ENCODE measurements at regions of chr6 and their contacts with region 1.

Region 1: GRCh38 chr6:157517601-157518359 is 136.8 kb downstream of the ZDHHC14 start:
- DNase-seq: no peak
- H3K4me3 Mint-ChIP-seq: no peak overlapping the region
- H3K27ac Mint-ChIP-seq: no peak overlapping the region
- H3K4me1 Mint-ChIP-seq: peaks cover 21% of the 10 kb centered on the region
- H3K27me3 Mint-ChIP-seq: no peaks in the 10 kb centered on the region
- CTCF ChIP-seq: no peak

Region 2: DNA sequence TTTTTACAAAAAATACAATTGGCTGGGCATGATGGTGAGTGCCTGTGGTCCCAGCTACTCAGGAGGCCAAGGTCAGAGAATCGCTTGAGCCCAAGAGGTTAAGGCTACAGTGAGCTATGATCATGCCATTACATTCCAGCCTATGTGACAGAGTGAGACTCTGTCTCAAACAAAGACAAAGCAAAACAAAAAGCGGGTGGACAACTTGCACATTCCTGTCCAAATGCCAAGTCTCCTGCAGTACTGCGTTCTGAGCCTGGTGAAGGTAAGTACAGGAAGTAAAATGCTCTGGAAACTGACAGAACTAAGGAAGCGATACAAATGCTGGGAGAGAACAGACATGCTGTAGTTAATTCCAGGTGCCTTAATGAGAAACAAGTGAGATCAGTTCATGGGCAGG is 174.0 kb before region 1 on chr6:
- CTCF ChIA-PET with region 1: no interaction called
- intact Hi-C with region 1: no loop called
- DNase-seq: no peak
- H3K4me3 Mint-ChIP-seq: no peak overlapping the region
- H3K27ac Mint-ChIP-seq: no peak overlapping the region
- H3K4me1 Mint-ChIP-seq: no peaks in the 10 kb centered on the region
- H3K27me3 Mint-ChIP-seq: no peaks in the 10 kb centered on the region
- CTCF ChIP-seq: no peak

Region 3: GRCh38 chr6:157374889-157375443 is 142.8 kb before region 1 on chr6:
- CTCF ChIA-PET with region 1: no interaction called
- intact Hi-C with region 1: no loop called
- DNase-seq: no peak
- H3K4me3 Mint-ChIP-seq: no peak overlapping the region
- H3K27ac Mint-ChIP-seq: no peak overlapping the region
- H3K4me1 Mint-ChIP-seq: no peaks in the 10 kb centered on the region
- H3K27me3 Mint-ChIP-seq: no peaks in the 10 kb centered on the region
- CTCF ChIP-seq: no peak

Region 4: DNA sequence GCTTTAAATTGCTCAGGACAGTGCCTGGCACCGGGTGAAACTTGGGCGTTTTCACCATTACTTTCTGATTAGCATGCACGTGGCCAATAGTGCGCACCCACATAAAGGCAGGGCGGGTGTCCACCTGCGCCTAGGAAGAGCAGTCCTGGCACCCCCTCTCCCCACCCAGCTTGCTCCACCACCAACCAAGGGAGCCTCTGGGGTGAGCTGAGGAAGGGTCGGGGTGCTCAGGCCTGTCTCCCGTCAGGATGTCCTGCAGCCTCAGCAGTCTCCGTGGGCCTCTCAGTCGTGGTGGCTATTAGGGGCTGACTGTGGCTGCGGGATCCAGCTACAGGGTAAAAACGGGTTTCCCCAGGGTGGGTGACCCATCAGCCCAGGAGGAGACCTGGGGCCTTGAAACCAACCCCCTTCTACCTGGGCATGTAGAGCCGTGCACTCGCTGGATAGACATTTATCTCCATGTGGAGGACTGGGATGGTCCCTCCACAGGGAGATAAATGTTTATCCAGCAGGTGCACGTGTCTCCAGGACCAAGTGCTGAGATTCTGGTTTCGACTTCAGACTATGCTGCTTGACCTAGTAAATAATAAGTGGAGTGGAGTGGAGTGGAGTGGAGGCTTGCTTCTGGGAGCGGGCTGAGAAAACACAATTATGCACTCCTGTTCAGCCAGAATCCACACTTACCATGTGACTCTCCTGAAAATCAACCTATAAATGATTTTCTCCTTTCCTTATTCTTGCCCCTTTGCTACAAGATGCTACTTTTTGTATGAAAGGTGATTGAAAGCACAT is 45.7 kb before region 1 on chr6:
- CTCF ChIA-PET with region 1: no interaction called
- intact Hi-C with region 1: no loop called
- DNase-seq: no peak
- H3K4me3 Mint-ChIP-seq: no peak overlapping the region
- H3K27ac Mint-ChIP-seq: no peak overlapping the region
- H3K4me1 Mint-ChIP-seq: peaks cover 6% of the 10 kb centered on the region
- H3K27me3 Mint-ChIP-seq: no peaks in the 10 kb centered on the region
- CTCF ChIP-seq: no peak

Region 5: GRCh38 chr6:157500022-157500421 is 17.8 kb before region 1 on chr6:
- CTCF ChIA-PET with region 1: no interaction called
- intact Hi-C with region 1: loop called (anchors 2 kb)
- DNase-seq: no peak
- H3K4me3 Mint-ChIP-seq: no peak overlapping the region
- H3K27ac Mint-ChIP-seq: no peak overlapping the region
- H3K4me1 Mint-ChIP-seq: no peaks in the 10 kb centered on the region
- H3K27me3 Mint-ChIP-seq: no peaks in the 10 kb centered on the region
- CTCF ChIP-seq: no peak

Region 6: DNA sequence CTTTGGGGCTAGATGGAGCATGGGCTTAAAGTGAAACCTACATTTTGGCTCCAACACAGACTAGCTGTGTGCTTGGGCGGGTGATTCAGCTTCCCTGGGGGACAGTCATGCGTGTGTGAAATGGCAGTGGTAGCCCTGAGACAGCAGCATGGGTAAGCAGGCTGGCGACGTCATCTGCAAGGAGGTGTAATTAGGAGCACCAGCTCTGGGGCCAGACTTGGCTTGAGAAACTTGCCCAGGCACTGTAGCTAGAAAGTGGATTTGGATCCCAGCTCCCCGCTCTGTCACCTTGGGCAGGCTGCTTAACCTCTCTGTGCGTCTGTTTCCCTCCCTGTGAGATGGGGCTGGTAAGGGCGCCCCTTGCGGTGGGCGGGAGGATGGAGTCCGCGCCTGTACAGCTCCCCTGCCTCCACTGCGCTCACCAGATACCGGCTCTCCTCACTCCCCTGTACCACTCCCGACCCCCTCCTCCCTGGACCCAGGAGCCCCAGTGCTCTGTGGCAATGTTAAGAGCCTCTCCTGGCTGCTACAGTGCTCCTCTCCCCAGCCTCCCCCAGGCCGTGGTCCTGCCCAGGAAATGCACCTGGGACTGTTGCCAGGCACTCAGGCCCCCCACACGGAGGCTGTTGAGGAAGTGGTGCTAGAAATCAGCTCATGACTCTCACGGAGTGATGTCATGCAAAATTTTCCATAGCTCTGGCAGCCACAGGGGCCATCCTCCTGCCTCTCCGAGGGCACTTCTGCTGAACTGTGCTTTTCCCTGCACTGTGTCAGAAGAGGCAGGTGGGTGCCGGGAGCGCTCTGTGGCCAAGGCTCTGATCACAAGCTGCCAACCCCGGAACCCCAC is 508.5 kb after region 1 on chr6:
- CTCF ChIA-PET with region 1: no interaction called
- intact Hi-C with region 1: no loop called
- DNase-seq: peak; percentile 93
- H3K4me3 Mint-ChIP-seq: peak overlapping the region; percentile 54
- H3K27ac Mint-ChIP-seq: peak overlapping the region; percentile 97
- H3K4me1 Mint-ChIP-seq: peaks cover 30% of the 10 kb centered on the region
- H3K27me3 Mint-ChIP-seq: no peaks in the 10 kb centered on the region
- CTCF ChIP-seq: peak; percentile 88